PC-3 (cell line): ENCODE measurements at regions of chr15 and their contacts with region 1.

Region 1: DNA sequence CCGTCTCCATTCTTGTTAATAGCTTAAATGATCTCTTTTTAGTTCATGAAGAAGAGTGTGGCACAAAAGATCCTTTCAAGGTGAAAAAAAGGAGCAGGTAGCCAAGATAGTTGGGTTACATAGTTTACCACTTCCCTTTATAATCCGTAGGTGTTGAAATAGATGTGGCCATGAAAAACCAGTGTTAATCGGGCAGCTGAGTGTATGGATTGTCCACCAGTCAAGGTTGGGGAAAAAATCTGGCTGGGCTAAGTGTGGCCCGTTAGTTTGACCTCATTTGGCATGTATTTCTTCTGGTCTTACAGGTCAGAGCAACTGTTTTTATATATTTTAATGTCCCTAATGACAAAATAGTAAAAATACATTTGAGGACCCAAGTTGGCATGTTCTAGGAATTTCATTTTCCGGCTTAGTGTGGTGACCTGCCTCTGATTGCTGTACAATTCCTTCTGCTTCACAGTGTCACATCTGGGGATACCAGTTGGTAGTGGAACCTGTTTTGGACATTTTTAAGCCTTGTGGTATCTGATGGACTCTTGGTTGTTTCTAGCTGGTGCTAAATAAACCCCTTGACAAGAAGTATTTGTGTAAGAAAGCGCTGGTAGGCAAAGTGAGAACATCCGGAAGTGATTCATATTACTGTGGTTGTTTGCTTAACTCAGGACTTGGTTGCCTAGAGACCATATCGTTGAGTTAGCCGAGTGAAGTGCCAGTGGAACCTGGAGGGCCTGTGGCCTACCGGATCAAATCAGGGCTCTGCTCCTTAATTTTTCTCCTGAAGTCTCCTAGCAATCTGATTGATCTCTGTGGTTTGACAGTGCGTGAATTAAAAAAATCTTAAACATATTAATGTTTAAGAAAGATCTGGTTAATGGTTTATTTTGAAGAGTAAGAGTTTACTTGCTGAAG is 12.6 kb downstream of the IQGAP1 start:
- DNase-seq: peak; percentile 94
- ATAC-seq: peak; percentile 77
- H3K4me3 ChIP-seq: peak overlapping the region; percentile 33
- H3K27ac ChIP-seq: peak overlapping the region; percentile 78
- H3K4me1 ChIP-seq: peaks cover 45% of the 10 kb centered on the region
- H3K27me3 ChIP-seq: no peaks in the 10 kb centered on the region
- CTCF ChIP-seq: no peak

Region 2: DNA sequence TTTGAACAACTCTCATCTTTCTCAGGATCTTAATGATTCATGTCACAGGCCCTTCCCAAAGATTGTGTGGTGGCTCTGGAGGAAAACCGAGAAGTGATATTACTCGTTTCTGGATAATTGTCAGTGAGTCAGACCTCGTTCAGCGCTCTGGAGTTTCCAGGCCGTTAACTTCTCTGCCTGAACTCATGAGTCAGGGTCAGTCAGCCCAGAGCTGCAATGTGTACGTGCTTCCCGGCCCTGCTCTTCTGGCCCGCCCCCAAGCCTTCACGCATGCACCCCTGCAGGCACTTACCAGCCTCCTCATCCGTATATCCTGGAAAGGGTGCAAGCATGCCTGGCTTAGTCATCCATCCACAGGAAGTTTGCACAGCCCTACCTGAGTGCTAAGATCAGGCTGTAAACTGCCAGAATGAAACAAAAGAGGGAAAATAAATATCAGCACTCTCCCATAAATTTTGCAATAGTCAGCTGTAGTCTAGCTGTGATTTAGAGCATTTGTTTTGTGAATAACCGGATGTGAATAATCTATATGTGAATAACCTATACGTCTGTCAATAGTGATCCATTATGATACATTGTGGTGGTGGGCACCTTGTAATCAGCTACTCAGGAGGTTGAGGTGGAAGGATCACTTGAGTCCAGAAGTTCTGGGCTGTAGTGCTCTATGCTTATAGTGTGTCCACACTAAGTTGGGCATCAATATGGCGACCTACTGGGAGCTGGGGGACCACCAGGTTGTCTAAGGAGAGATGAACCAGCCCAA is 234.8 kb before region 1 on chr15:
- CTCF ChIA-PET with region 1: no interaction called
- POLR2A ChIA-PET with region 1: no interaction called
- intact Hi-C with region 1: loop called (anchors 5 kb)
- DNase-seq: peak; percentile 99
- ATAC-seq: peak; percentile 91
- H3K4me3 ChIP-seq: no peak overlapping the region
- H3K27ac ChIP-seq: peak overlapping the region; percentile 100
- H3K4me1 ChIP-seq: peaks cover 52% of the 10 kb centered on the region
- H3K27me3 ChIP-seq: no peaks in the 10 kb centered on the region
- CTCF ChIP-seq: no peak

Region 3: DNA sequence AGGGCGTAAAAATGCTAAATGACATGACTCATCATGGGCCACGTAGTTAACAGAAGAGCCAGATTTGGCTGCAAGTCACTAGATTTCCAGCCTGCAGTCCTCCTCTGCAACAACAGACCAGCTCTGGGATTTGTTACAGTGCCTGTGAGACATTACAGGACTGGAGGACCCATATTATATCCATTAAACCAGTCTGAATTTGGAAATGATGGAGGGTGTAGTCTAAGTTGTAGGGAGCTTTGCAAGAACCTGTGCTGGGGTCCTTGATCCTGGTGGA is 37.8 kb before region 1 on chr15:
- CTCF ChIA-PET with region 1: no interaction called
- POLR2A ChIA-PET with region 1: no interaction called
- intact Hi-C with region 1: loop called (anchors 5 kb)
- DNase-seq: peak; percentile 61
- ATAC-seq: peak; percentile 48
- H3K4me3 ChIP-seq: no peak overlapping the region
- H3K27ac ChIP-seq: peak overlapping the region; percentile 74
- H3K4me1 ChIP-seq: peaks cover 40% of the 10 kb centered on the region
- H3K27me3 ChIP-seq: no peaks in the 10 kb centered on the region
- CTCF ChIP-seq: no peak